ENCODE measurements at regions of chr20 and their contacts with region 1.

Region 1: GRCh38 chr20:33810885-33811777 is at the start of gene CHMP4B:
- DNase-seq: peak; percentile 98
- CTCF ChIP-seq: no peak

Region 2: DNA sequence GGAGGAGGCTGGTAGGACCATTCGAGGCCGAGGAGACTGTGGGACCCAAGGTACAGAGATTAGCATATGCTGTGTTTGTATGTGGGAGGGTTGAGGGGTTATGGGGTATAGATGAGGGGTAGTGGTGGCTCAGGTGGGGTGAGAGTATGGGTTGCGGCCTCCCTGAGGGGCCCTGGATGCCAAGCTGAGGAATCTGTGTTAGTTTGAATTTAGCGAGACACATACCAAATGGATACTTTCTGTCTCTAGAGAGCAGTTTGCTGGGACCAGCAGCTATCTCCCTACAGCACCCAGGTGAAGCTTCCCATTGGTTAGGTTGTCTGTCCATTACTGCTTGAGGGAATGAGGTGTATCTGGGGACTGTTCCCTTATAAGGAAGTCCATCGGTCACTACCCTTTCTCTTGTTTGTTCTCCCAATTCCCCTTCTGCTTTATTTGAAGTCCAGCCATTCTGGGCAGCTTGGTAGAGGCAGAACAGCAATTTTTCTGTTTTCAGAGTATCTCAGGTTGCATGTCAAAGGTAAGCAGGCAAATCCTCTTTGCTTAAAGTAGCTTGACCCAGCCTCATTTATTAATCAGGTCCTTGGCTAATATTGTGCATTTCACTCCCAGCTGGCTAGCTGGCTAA is 15.3 kb after region 1 on chr20:
- CTCF ChIA-PET with region 1: interaction called, 19 read pairs
- POLR2A ChIA-PET with region 1: no interaction called
- DNase-seq: no peak
- CTCF ChIP-seq: no peak